Spleen (tissue), 13 donors: ENCODE measurements at regions of chr16 and their contacts with region 1.

Region 1: DNA sequence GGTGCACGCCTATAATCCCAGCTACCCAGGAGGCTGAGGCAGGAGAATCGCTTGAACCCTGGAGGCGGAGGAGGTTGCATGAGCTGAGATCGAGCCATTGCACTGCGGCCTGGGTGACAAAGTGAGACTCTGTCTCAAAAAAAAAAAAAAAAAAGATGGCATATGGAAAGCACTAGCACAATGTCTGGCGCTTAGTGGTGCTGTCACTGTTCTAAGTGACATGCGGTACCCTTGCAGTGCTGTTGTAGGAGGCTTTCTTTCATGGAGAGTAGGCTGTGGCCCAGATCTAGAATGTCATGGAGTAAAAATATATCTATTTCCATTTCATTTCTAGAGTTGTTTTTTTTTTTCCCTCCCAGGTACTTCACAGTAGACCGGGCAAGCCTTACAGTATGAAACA is 14.6 kb upstream of the METTL9 start:
- DNase-seq: no peak
- H3K4me3 ChIP-seq: no peak overlapping the region
- H3K27ac ChIP-seq: no peak overlapping the region
- H3K4me1 ChIP-seq: peaks cover 0 to 30% (median 13%) of the 10 kb centered on the region in 6 donors
- H3K27me3 ChIP-seq: no peaks in the 10 kb centered on the region
- CTCF ChIP-seq: no peak
- POLR2A ChIP-seq: no peak

Region 2: DNA sequence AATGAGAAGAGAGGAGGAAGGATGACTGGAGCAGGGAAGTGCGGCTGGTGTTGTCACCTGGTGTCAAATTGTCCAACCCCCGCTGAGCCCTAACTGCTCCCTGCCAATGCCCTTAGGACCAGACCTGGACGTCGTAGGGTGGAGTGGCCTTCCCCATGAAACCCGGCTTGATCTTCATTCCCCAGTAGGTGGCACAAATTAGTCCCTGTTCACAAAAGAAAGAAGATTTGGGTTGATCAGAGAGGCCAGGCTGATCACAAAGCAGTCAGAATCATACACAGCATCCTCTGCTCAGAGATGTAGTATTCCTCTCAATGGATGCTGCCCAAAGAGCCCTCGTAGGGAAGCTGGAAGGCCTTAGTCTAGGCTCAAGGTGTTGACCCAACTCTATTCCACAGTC is 947.6 kb before region 1 on chr16:
- intact Hi-C with region 1: no loop called
- DNase-seq: no peak
- H3K4me3 ChIP-seq: no peak overlapping the region
- H3K27ac ChIP-seq: no peak overlapping the region
- H3K4me1 ChIP-seq: peaks cover 0 to 3% (median 0%) of the 10 kb centered on the region in 6 donors
- H3K27me3 ChIP-seq: no peaks in the 10 kb centered on the region
- CTCF ChIP-seq: no peak
- POLR2A ChIP-seq: no peak

Region 3: DNA sequence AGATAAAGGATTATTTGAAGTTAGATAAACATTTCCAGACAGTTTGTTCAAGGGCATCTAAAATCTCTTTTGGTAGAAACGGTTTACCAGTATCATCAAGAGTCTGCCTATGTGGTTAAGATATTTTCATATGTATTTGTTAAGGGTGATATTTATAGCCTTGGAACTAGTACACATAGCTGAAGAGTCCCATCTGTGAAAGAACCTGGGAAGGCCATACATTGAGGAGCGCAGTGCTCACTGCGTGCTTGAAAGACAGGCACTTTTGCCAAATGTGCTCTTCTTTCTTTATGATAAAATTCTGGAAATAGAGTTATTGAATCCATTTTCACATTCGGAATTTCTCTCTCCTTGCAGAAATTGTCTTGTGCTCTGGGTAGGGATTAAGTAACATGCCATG is 59.9 kb after region 1 on chr16:
- intact Hi-C with region 1: loop called (anchors 5 kb)
- DNase-seq: no peak
- H3K4me3 ChIP-seq: peak overlapping the region in 5 of 8 donors; percentile 26 to 59 (median 33)
- H3K27ac ChIP-seq: peak overlapping the region; percentile 67 to 89 (median 86)
- H3K4me1 ChIP-seq: peaks cover 36 to 100% (median 83%) of the 10 kb centered on the region in 6 donors
- H3K27me3 ChIP-seq: no peaks in the 10 kb centered on the region
- CTCF ChIP-seq: no peak
- POLR2A ChIP-seq: no peak

Region 4: GRCh38 chr16:21708533-21709115 is 123.8 kb after region 1 on chr16:
- intact Hi-C with region 1: loop called (anchors 5 kb)
- DNase-seq: peak; percentile 78
- H3K4me3 ChIP-seq: no peak overlapping the region
- H3K27ac ChIP-seq: no peak overlapping the region
- H3K4me1 ChIP-seq: peaks cover 0 to 20% (median 10%) of the 10 kb centered on the region in 6 donors
- H3K27me3 ChIP-seq: peaks cover 0 to 6% (median 0%) of the 10 kb centered on the region in 7 donors
- CTCF ChIP-seq: peak; percentile 71 to 92 (median 84)
- POLR2A ChIP-seq: no peak